ENCODE measurements at regions of chr6 and their contacts with region 1.

Region 1: GRCh38 chr6:148780918-148781436 is 34.1 kb downstream of the UST start:
- DNase-seq: no peak
- H3K4me3 Mint-ChIP-seq: no peak overlapping the region
- H3K27ac Mint-ChIP-seq: peak overlapping the region; percentile 39
- H3K4me1 Mint-ChIP-seq: peaks cover 8% of the 10 kb centered on the region
- H3K27me3 Mint-ChIP-seq: peaks cover 5% of the 10 kb centered on the region

Region 2: GRCh38 chr6:148559848-148560433 is 221.0 kb before region 1 on chr6:
- CTCF ChIA-PET with region 1: interaction called, 5 read pairs
- intact Hi-C with region 1: loop called (anchors 5 kb)
- DNase-seq: peak; percentile 64
- H3K4me3 Mint-ChIP-seq: no peak overlapping the region
- H3K27ac Mint-ChIP-seq: no peak overlapping the region
- H3K4me1 Mint-ChIP-seq: peaks cover 4% of the 10 kb centered on the region
- H3K27me3 Mint-ChIP-seq: peaks cover 18% of the 10 kb centered on the region

Region 3: GRCh38 chr6:148620579-148621298 is 160.2 kb before region 1 on chr6:
- CTCF ChIA-PET with region 1: no interaction called
- intact Hi-C with region 1: no loop called
- DNase-seq: no peak
- H3K4me3 Mint-ChIP-seq: no peak overlapping the region
- H3K27ac Mint-ChIP-seq: no peak overlapping the region
- H3K4me1 Mint-ChIP-seq: no peaks in the 10 kb centered on the region
- H3K27me3 Mint-ChIP-seq: peaks cover 8% of the 10 kb centered on the region

Region 4: GRCh38 chr6:148760568-148761526 is 20.1 kb before region 1 on chr6:
- CTCF ChIA-PET with region 1: interaction called, 8 read pairs
- intact Hi-C with region 1: loop called (anchors 1 kb)
- DNase-seq: peak; percentile 41
- H3K4me3 Mint-ChIP-seq: peak overlapping the region; percentile 30
- H3K27ac Mint-ChIP-seq: peak overlapping the region; percentile 65
- H3K4me1 Mint-ChIP-seq: peaks cover 37% of the 10 kb centered on the region
- H3K27me3 Mint-ChIP-seq: peaks cover 37% of the 10 kb centered on the region

Region 5: GRCh38 chr6:148835920-148836441 is 55.0 kb after region 1 on chr6:
- CTCF ChIA-PET with region 1: no interaction called
- intact Hi-C with region 1: loop called (anchors 1 kb)
- DNase-seq: peak; percentile 23
- H3K4me3 Mint-ChIP-seq: peak overlapping the region; percentile 5
- H3K27ac Mint-ChIP-seq: no peak overlapping the region
- H3K4me1 Mint-ChIP-seq: peaks cover 17% of the 10 kb centered on the region
- H3K27me3 Mint-ChIP-seq: peaks cover 14% of the 10 kb centered on the region

Region 6: GRCh38 chr6:148898376-148899014 is 117.5 kb after region 1 on chr6:
- CTCF ChIA-PET with region 1: no interaction called
- intact Hi-C with region 1: no loop called
- DNase-seq: no peak
- H3K4me3 Mint-ChIP-seq: no peak overlapping the region
- H3K27ac Mint-ChIP-seq: no peak overlapping the region
- H3K4me1 Mint-ChIP-seq: no peaks in the 10 kb centered on the region
- H3K27me3 Mint-ChIP-seq: peaks cover 2% of the 10 kb centered on the region

Measured in activated naive CD4-positive, alpha-beta T cell treated with anti-CD3 and anti-CD28 coated beads for 36 hours (primary cell).